PC-9 (cell line): ENCODE measurements at regions of chr10 and their contacts with region 1.

Region 1: GRCh38 chr10:127657056-127657455 is 79.9 kb upstream of the FOXI2 start:
- DNase-seq: no peak
- H3K4me3 ChIP-seq: no peak overlapping the region
- H3K27ac ChIP-seq: no peak overlapping the region
- H3K4me1 ChIP-seq: no peaks in the 10 kb centered on the region
- H3K27me3 ChIP-seq: no peaks in the 10 kb centered on the region
- CTCF ChIP-seq: no peak

Region 2: GRCh38 chr10:128035557-128035973 is 378.5 kb after region 1 on chr10:
- CTCF ChIA-PET with region 1: no interaction called
- POLR2A ChIA-PET with region 1: no interaction called
- intact Hi-C with region 1: no loop called
- DNase-seq: no peak
- H3K4me3 ChIP-seq: no peak overlapping the region
- H3K27ac ChIP-seq: no peak overlapping the region
- H3K4me1 ChIP-seq: peaks cover 8% of the 10 kb centered on the region
- H3K27me3 ChIP-seq: no peaks in the 10 kb centered on the region
- CTCF ChIP-seq: peak; percentile 62

Region 3: DNA sequence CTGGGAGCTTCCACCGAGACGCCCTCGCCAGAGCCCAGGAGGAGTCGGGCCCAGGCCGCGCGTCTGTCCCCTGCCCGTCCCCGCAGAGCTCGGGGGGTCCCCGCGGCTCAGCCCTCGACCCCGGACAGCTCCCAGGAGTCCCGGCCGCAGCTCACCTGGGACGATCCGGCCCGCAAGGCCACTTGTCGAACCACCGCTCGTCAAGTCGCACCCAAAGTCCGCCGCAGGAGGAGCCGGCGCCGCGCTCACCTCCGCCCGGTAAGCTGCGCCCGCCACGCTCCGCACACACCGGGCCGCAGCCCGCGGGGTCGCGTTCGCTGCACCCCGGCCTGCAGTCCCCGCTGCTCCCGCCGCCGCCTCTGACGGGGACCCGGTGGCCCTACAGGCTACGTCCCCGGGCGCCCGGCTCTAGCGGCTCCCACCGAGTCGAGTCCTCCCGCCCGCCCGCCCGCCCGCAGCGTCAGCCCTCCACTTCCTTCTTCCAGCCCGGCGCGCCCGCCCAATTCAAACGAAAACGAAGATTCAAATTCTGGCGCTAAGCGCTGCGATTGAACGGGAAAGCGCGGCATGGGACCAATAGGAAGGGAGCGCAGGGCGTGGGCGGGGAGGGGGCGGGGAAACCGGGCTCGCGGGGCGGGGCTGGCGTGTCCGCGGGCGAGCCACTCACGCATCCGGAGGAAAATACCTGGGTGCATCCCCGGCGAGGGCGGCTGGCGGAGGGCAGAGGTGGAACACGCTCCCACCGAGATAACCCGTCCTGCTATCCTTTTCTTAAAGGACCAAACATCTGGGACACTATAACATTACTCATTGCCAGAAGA is 469.1 kb after region 1 on chr10 and contains the start of gene MKI67:
- CTCF ChIA-PET with region 1: interaction called, 13 read pairs
- POLR2A ChIA-PET with region 1: no interaction called
- intact Hi-C with region 1: no loop called
- DNase-seq: peak; percentile 80 to 82
- H3K4me3 ChIP-seq: peak within 1 kb of the TSS; percentile 71
- H3K27ac ChIP-seq: no peak within 1 kb of the TSS
- H3K4me1 ChIP-seq: peaks cover 30% of the 10 kb centered on the region
- H3K27me3 ChIP-seq: no peaks in the 10 kb centered on the region
- CTCF ChIP-seq: no peak
- total RNA-seq, gene MKI67: 75.2 and 114 TPM in 2 replicates